CD8-positive, alpha-beta memory T cell (primary cell): ENCODE measurements at regions of chr18 and their contacts with region 1.

Region 1: GRCh38 chr18:5295981-5296705 is 617 bp upstream of the ZBTB14 start:
- DNase-seq: peak; percentile 92 to 97 (median 95)
- H3K4me3 ChIP-seq: peak overlapping the region; percentile 91
- H3K4me3 Mint-ChIP-seq: peak overlapping the region; percentile 91 to 98 (median 97)
- H3K27ac ChIP-seq: peak overlapping the region; percentile 87
- H3K27ac Mint-ChIP-seq: peak overlapping the region; percentile 95 to 99 (median 98)
- H3K4me1 ChIP-seq: peaks cover 29% of the 10 kb centered on the region
- H3K4me1 Mint-ChIP-seq: peaks cover 34 to 46% (median 43%) of the 10 kb centered on the region in 3 donors
- H3K27me3 ChIP-seq: no peaks in the 10 kb centered on the region
- H3K27me3 Mint-ChIP-seq: peaks cover 0 to 9% of the 10 kb centered on the region in 2 donors

Region 2: GRCh38 chr18:5122270-5122669 is 173.9 kb before region 1 on chr18:
- CTCF ChIA-PET with region 1: no interaction called
- POLR2A ChIA-PET with region 1: no interaction called
- DNase-seq: peak in 1 of 5 donors; percentile 8
- H3K4me3 ChIP-seq: no peak overlapping the region
- H3K4me3 Mint-ChIP-seq: no peak overlapping the region
- H3K27ac ChIP-seq: no peak overlapping the region
- H3K27ac Mint-ChIP-seq: no peak overlapping the region
- H3K4me1 ChIP-seq: no peaks in the 10 kb centered on the region
- H3K4me1 Mint-ChIP-seq: no peaks in the 10 kb centered on the region
- H3K27me3 ChIP-seq: no peaks in the 10 kb centered on the region
- H3K27me3 Mint-ChIP-seq: peaks cover 16 to 20% of the 10 kb centered on the region in 2 donors

Region 3: GRCh38 chr18:5214583-5215351 is 81.4 kb before region 1 on chr18:
- CTCF ChIA-PET with region 1: no interaction called
- POLR2A ChIA-PET with region 1: no interaction called
- DNase-seq: no peak
- H3K4me3 ChIP-seq: no peak overlapping the region
- H3K4me3 Mint-ChIP-seq: no peak overlapping the region
- H3K27ac ChIP-seq: no peak overlapping the region
- H3K27ac Mint-ChIP-seq: no peak overlapping the region
- H3K4me1 ChIP-seq: no peaks in the 10 kb centered on the region
- H3K4me1 Mint-ChIP-seq: peaks cover 4 to 7% (median 4%) of the 10 kb centered on the region in 3 donors
- H3K27me3 ChIP-seq: no peaks in the 10 kb centered on the region
- H3K27me3 Mint-ChIP-seq: peaks cover 14 to 47% of the 10 kb centered on the region in 2 donors

Region 4: GRCh38 chr18:5237723-5238370 is 58.3 kb before region 1 on chr18:
- CTCF ChIA-PET with region 1: interaction called, 50 read pairs
- POLR2A ChIA-PET with region 1: interaction called, 136 read pairs
- DNase-seq: peak; percentile 75 to 93 (median 87)
- H3K4me3 ChIP-seq: peak overlapping the region; percentile 94
- H3K4me3 Mint-ChIP-seq: peak overlapping the region; percentile 89 to 97 (median 95)
- H3K27ac ChIP-seq: peak overlapping the region; percentile 97
- H3K27ac Mint-ChIP-seq: peak overlapping the region; percentile 89 to 100 (median 98)
- H3K4me1 ChIP-seq: peaks cover 27% of the 10 kb centered on the region
- H3K4me1 Mint-ChIP-seq: peaks cover 46 to 55% (median 51%) of the 10 kb centered on the region in 3 donors
- H3K27me3 ChIP-seq: no peaks in the 10 kb centered on the region
- H3K27me3 Mint-ChIP-seq: peaks cover 17 to 18% of the 10 kb centered on the region in 2 donors

Region 5: DNA sequence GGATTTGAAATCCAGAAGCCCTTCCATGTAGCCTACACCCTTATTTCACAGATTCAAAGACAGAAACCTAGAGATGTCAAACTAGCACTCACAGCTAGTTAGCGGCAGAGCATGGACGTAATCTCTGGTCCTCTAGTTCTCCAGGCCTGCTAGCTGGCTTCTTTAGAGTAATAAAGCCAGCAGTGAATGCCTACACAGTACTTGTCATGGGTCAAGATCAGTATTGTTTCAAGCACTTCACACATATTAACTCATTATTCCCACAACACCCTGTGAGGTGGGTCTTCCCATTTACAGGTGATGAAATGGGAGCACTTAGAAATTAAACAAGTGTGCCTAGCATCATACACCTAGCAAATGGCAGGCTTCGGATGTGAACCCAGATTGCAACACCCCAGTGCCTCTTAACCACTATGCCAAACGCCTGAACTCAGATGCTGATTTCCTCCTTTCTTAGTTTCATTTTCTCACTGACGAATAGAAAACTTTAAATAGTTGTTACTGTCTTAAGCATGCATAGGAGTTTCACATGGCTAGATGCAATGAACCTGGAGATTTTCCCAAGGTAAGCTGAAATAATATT is 13.8 kb after region 1 on chr18:
- CTCF ChIA-PET with region 1: interaction called, 15 read pairs
- POLR2A ChIA-PET with region 1: interaction called, 18 read pairs
- DNase-seq: peak in 4 of 5 donors; percentile 8 to 60 (median 50)
- H3K4me3 ChIP-seq: peak overlapping the region; percentile 64
- H3K4me3 Mint-ChIP-seq: peak overlapping the region; percentile 77 to 86 (median 82)
- H3K27ac ChIP-seq: peak overlapping the region; percentile 45
- H3K27ac Mint-ChIP-seq: peak overlapping the region; percentile 63 to 96 (median 93)
- H3K4me1 ChIP-seq: peaks cover 7% of the 10 kb centered on the region
- H3K4me1 Mint-ChIP-seq: peaks cover 24 to 29% (median 29%) of the 10 kb centered on the region in 3 donors
- H3K27me3 ChIP-seq: no peaks in the 10 kb centered on the region
- H3K27me3 Mint-ChIP-seq: peaks cover 0 to 1% of the 10 kb centered on the region in 2 donors